Activated CD4-positive, alpha-beta T cell treated with anti-CD3 and anti-CD28 coated beads for 36 hours (primary cell): ENCODE measurements at regions of chr16 and their contacts with region 1.

Region 1: GRCh38 chr16:69123910-69124309 is 8.5 kb downstream of the CHTF8 start:
- DNase-seq: peak; percentile 79
- ATAC-seq: peak; percentile 51
- H3K4me3 Mint-ChIP-seq: no peak overlapping the region
- H3K27ac Mint-ChIP-seq: no peak overlapping the region
- H3K4me1 Mint-ChIP-seq: peaks cover 20% of the 10 kb centered on the region
- H3K27me3 Mint-ChIP-seq: no peaks in the 10 kb centered on the region

Region 2: DNA sequence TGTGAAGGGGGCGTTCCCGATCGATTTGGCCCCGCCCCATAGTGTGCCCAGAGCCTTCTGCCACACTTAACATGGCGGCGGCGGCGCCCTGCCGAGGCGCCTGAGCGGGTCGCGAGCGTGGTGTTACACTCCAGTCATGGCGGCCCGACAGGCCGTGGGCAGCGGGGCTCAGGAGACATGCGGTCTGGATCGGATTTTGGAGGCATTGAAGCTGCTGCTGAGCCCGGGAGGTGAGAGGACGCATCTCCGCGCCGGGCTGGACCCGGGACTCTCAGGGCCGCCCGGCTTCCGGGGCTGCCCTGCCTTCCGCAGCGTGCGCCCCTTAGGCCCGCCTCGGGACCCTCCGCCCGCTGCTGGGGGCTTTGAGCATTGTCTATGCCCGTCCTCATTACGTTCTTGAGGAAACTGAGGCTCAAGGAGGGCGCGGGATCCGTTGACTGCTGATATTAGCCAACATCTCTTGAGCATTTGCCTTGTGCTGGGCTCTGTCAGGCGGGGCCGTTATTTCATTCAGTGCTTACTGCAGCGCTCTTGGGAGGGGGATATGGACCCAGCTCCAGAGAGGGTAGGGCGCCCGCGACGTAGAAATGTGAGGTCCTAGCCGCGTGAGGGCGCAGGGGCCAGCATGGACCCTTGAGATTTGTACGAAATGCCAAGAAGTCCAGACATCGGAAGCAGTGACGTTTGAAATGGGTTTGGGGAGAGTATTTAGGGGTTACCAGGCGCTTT is 280.3 kb before region 1 on chr16 and contains the start of gene TANGO6:
- CTCF ChIA-PET with region 1: interaction called, 4 read pairs
- POLR2A ChIA-PET with region 1: no interaction called
- intact Hi-C with region 1: loop called in 1 of 2 experiments (anchors 1 kb)
- DNase-seq: peak; percentile 95
- ATAC-seq: peak; percentile 93
- H3K4me3 Mint-ChIP-seq: peak within 1 kb of the TSS; percentile 84
- H3K27ac Mint-ChIP-seq: peak within 1 kb of the TSS; percentile 91
- H3K4me1 Mint-ChIP-seq: peaks cover 27% of the 10 kb centered on the region
- H3K27me3 Mint-ChIP-seq: no peaks in the 10 kb centered on the region
- total RNA-seq, gene TANGO6: 29.7 to 31.2 TPM

Region 3: DNA sequence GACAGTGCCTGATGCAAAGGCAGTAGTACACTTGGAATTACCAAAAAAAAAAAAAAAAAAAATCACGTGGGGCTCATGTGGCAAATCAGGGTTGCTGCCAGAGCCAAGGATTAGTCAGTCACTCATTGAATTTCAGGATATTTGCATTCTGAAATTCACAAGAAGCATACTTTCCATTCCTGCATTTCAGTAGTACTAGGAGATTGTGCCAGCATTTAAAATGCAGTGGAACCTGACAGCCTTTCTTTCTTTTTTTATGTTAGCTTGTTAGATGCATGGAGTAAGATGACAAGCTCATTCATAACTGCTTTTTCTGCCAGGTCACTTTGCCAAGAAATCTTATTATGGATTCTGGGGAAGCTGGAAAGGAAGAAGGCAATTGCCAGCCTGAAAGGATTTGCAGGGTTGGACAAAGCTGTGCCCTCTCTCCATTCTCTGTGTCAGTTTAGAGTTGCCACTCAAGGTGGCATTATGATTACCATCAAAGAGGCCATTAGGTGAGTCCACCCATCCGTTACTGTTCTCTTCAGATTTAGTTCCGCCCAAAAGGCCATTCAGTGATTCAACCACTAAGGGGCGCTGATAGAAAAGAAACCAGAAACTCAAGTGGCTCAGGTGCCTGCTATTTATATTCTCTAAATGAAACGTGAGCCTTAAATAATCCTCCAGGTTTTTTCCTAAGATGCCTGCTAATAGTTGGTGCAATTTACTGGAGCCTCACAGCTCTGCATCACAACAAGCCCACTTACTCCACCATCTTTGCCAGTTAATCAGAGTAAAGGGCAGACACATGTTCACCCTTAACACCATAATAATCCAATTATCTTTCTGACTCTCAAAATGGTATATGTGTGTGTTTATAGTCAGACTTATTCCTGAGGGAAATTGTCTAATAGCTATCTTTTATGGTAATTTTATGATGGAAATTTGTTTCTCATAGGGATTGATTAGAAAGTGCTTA is 221.6 kb before region 1 on chr16:
- CTCF ChIA-PET with region 1: interaction called, 7 read pairs
- POLR2A ChIA-PET with region 1: no interaction called
- intact Hi-C with region 1: loop called in 1 of 2 experiments (anchors 5 kb)
- DNase-seq: peak; percentile 30
- ATAC-seq: no peak
- H3K4me3 Mint-ChIP-seq: no peak overlapping the region
- H3K27ac Mint-ChIP-seq: no peak overlapping the region
- H3K4me1 Mint-ChIP-seq: no peaks in the 10 kb centered on the region
- H3K27me3 Mint-ChIP-seq: no peaks in the 10 kb centered on the region

Region 4: DNA sequence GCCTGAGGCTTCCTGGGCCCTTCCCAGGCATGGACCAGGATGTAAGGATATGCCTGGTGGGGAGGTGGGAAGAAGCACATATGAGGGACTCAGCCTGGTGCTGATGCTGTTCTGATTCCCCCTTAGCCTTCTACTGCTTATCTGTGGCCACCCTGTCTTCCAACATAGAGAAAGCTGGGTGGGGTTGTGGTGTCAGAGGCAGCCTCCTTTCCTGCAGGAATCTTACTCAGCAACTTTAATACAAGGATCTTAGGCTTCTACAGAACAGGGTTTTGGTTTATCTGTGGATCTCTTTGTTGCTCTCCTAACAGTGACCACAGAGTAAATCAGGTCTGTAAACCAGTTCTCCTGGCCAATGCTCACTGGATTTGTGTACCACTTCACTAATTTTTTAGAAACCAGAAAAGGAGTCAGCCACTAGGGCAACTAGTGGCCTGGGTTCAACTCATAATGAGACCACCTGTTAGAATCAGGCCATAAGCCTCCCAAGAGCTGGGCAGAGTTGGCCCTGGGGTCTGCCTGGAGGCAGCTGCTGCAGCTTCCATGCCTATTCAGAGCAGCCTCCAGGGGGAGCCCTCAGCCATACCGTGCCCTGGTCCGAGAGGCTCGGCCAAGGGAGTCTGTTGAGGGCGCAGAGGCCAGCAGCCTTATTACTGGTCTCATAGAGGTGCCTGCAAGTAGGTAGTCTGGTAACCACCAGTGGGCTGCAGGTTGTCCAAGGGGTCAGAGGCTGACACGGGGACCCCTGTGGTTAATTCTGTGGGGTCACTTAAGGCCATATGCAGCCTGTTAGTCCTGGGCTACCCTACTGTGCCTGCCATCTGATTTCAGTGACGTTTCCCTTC is 11.4 kb before region 1 on chr16:
- CTCF ChIA-PET with region 1: interaction called, 59 read pairs
- POLR2A ChIA-PET with region 1: no interaction called
- intact Hi-C with region 1: no loop called
- DNase-seq: peak; percentile 79
- ATAC-seq: peak; percentile 85
- H3K4me3 Mint-ChIP-seq: no peak overlapping the region
- H3K27ac Mint-ChIP-seq: no peak overlapping the region
- H3K4me1 Mint-ChIP-seq: peaks cover 4% of the 10 kb centered on the region
- H3K27me3 Mint-ChIP-seq: peaks cover 8% of the 10 kb centered on the region